ENCODE measurements at regions of chr3 and their contacts with region 1.

Region 1: GRCh38 chr3:130746246-130747039 is at the start of gene PIK3R4:
- DNase-seq: peak; percentile 99
- H3K4me3 Mint-ChIP-seq: peak within 1 kb of the TSS; percentile 90
- H3K27ac Mint-ChIP-seq: peak within 1 kb of the TSS; percentile 96
- H3K4me1 Mint-ChIP-seq: peaks cover 41% of the 10 kb centered on the region
- H3K27me3 Mint-ChIP-seq: no peaks in the 10 kb centered on the region
- total RNA-seq, gene PIK3R4: 30.8 and 34.7 TPM in 2 replicates

Region 2: GRCh38 chr3:130621824-130622223 is 124.6 kb before region 1 on chr3:
- intact Hi-C with region 1: no loop called
- DNase-seq: no peak
- H3K4me3 Mint-ChIP-seq: no peak overlapping the region
- H3K27ac Mint-ChIP-seq: no peak overlapping the region
- H3K4me1 Mint-ChIP-seq: no peaks in the 10 kb centered on the region
- H3K27me3 Mint-ChIP-seq: no peaks in the 10 kb centered on the region

Region 3: DNA sequence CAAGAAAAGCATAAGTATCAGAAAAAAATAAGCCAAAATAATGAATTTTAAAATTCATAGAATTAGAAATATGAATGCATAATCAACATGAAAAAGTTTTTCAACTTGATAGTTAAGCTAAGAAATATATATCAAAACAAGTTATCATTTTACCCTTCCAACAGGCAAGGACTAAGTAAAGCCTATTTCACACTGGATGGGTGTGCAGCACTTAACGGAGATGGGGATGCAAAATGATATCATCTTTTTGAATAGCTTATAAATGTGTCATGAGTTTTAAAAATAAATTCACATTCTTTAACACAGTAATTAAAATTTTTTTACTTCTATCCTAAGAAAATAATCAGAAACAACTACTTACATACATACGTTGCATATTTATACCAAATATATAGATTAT is 20.7 kb before region 1 on chr3:
- intact Hi-C with region 1: loop called (anchors 2 kb)
- DNase-seq: no peak
- H3K4me3 Mint-ChIP-seq: no peak overlapping the region
- H3K27ac Mint-ChIP-seq: no peak overlapping the region
- H3K4me1 Mint-ChIP-seq: peaks cover 6% of the 10 kb centered on the region
- H3K27me3 Mint-ChIP-seq: no peaks in the 10 kb centered on the region

Region 4: GRCh38 chr3:130759699-130760338 is 13.4 kb after region 1 on chr3:
- intact Hi-C with region 1: loop called (anchors 1 kb)
- DNase-seq: peak; percentile 89
- H3K4me3 Mint-ChIP-seq: no peak overlapping the region
- H3K27ac Mint-ChIP-seq: no peak overlapping the region
- H3K4me1 Mint-ChIP-seq: peaks cover 9% of the 10 kb centered on the region
- H3K27me3 Mint-ChIP-seq: peaks cover 9% of the 10 kb centered on the region

Region 5: GRCh38 chr3:130850044-130850797 is 103.8 kb after region 1 on chr3:
- intact Hi-C with region 1: loop called (anchors 1 kb)
- DNase-seq: peak; percentile 87
- H3K4me3 Mint-ChIP-seq: peak overlapping the region; percentile 64
- H3K27ac Mint-ChIP-seq: peak overlapping the region; percentile 75
- H3K4me1 Mint-ChIP-seq: peaks cover 26% of the 10 kb centered on the region
- H3K27me3 Mint-ChIP-seq: peaks cover 34% of the 10 kb centered on the region

Region 6: GRCh38 chr3:130870423-130870822 is 124.0 kb after region 1 on chr3:
- intact Hi-C with region 1: no loop called
- DNase-seq: no peak
- H3K4me3 Mint-ChIP-seq: no peak overlapping the region
- H3K27ac Mint-ChIP-seq: no peak overlapping the region
- H3K4me1 Mint-ChIP-seq: no peaks in the 10 kb centered on the region
- H3K27me3 Mint-ChIP-seq: peaks cover 5% of the 10 kb centered on the region

Region 7: GRCh38 chr3:131502530-131503245 is 756.2 kb after region 1 on chr3 and contains the start of gene MRPL3:
- intact Hi-C with region 1: loop called (anchors 1 kb)
- DNase-seq: peak; percentile 95
- H3K4me3 Mint-ChIP-seq: peak within 1 kb of the TSS; percentile 100
- H3K27ac Mint-ChIP-seq: peak within 1 kb of the TSS; percentile 98
- H3K4me1 Mint-ChIP-seq: peaks cover 30% of the 10 kb centered on the region
- H3K27me3 Mint-ChIP-seq: no peaks in the 10 kb centered on the region
- total RNA-seq, gene MRPL3: 175 and 189 TPM in 2 replicates

Measured in activated CD4-positive, alpha-beta T cell treated with anti-CD3 and anti-CD28 coated beads, Interleukin-2, amount 10 ng/mL, durations not matched to agents 24 days and 14 days (primary cell).